CD4-positive, alpha-beta T cell (primary cell): ENCODE measurements at regions of chrX and their contacts with region 1.

Region 1: DNA sequence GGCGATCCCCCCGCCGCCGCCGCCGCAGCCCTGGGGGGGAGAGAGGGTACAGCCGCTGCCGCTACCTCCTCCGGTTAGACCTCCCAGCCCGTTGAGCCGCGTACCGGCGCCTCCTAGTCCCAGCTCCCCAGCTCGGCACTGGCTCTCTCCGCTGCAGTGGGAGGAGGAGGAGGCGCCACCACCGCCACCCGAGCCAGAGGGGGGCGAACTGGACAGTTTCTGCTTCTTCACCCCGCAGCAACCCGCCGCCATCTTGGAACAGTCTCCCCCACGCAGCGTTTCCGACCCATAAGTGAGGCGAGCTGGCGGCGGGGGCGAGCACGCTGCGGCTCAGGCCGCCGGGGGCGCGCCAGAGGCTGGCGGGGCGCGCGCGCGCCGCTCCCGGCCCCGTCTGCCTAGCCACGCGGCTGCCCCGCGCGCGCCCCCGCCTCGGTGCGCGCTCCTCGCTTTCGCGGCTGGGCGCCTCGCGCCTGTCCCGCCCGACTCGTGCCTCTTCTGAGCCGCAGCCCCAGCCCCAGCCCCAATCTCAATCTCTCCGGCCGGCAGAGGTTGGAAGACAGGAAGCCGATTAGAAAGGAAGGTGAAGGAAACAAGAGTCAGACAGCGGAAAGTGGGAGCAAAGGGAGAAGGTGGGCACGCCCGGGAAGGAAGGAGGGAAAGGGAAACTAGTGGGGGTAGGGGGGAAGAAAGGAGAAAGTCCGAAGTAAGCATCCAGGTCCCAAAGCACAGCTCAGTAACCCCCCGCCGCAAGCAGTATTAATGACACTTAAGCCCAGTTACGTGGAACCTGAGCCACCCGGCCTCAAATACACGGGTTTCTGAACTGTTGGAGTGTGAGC is at the start of gene AMMECR1:
- DNase-seq: peak; percentile 66 to 92 (median 77)
- ATAC-seq: peak; percentile 84
- H3K4me3 ChIP-seq: peak within 1 kb of the TSS; percentile 97
- H3K4me3 Mint-ChIP-seq: peak within 1 kb of the TSS; percentile 95
- H3K27ac ChIP-seq: peak within 1 kb of the TSS; percentile 69 to 71
- H3K27ac Mint-ChIP-seq: peak within 1 kb of the TSS; percentile 96
- H3K4me1 ChIP-seq: peaks cover 11% of the 10 kb centered on the region
- H3K4me1 Mint-ChIP-seq: peaks cover 44% of the 10 kb centered on the region
- H3K27me3 ChIP-seq: no peaks in the 10 kb centered on the region
- H3K27me3 Mint-ChIP-seq: no peaks in the 10 kb centered on the region
- CTCF ChIP-seq: no peak
- total RNA-seq, gene AMMECR1: 7.8 to 7.9 TPM

Region 2: GRCh38 chrX:109536439-109537336 is 781.4 kb before region 1 on chrX and contains the start of gene NXT2:
- CTCF ChIA-PET with region 1: no interaction called
- POLR2A ChIA-PET with region 1: no interaction called
- intact Hi-C with region 1: loop called in 1 of 2 experiments (anchors 10 kb)
- DNase-seq: peak; percentile 68 to 94 (median 81)
- ATAC-seq: peak; percentile 98
- H3K4me3 ChIP-seq: peak within 1 kb of the TSS; percentile 79
- H3K4me3 Mint-ChIP-seq: peak within 1 kb of the TSS; percentile 84
- H3K27ac ChIP-seq: peak within 1 kb of the TSS; percentile 81 to 92
- H3K27ac Mint-ChIP-seq: peak within 1 kb of the TSS; percentile 88
- H3K4me1 ChIP-seq: peaks cover 2% of the 10 kb centered on the region
- H3K4me1 Mint-ChIP-seq: peaks cover 13% of the 10 kb centered on the region
- H3K27me3 ChIP-seq: peaks cover 2 to 3% of the 10 kb centered on the region in 2 experiments
- H3K27me3 Mint-ChIP-seq: peaks cover 26% of the 10 kb centered on the region
- CTCF ChIP-seq: no peak
- total RNA-seq, gene NXT2: 4.0 to 4.1 TPM

Region 3: DNA sequence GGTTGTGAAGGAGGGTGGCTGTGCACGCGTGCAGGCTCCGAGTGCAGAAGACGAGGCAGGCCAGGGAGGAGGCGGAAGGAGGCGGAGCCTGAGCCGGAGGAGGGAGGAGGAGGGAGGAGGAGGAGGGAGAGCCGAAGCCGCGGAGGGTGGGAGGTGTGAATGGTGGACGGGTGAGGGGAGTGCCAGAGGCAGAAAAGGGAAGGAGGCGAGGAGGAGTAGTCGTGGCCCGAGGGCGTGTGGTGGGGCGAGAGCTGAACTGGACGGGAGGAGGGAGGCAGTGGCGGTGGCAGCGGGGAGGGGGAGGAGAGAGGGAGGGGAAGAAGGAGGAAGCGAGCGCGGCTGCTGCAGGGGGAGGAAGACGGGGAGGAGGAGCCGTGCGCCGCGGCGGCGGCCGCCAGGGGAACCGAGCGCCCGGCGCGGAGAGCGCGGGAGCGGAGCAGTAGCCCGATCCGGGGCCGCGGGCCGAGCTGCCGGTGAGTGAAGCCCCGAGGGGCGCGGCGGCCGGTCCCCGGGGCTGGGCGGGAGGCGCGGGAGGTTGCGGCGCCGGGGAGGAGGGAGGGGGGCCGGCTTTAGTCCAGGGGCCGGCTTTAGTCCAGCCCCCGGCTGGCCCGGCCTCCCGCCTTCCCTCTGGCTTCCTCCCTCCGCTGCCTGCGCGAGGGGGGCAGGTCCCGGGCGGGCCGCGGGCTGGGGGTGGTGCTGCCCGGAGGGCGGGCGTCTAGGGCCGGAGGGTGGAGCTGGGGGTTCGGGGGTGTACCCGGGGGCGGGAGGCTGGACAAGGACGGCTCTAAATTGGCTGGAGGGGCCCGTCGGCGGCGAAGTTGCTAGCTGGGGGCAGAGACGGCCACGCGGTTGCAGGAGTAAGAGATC is 315.5 kb before region 1 on chrX and contains the start of gene TMEM164:
- CTCF ChIA-PET with region 1: no interaction called
- POLR2A ChIA-PET with region 1: interaction called, 3 read pairs
- intact Hi-C with region 1: loop called in 1 of 2 experiments (anchors 5 kb)
- DNase-seq: peak; percentile 59 to 89 (median 76)
- ATAC-seq: peak; percentile 82
- H3K4me3 ChIP-seq: peak within 1 kb of the TSS; percentile 81
- H3K4me3 Mint-ChIP-seq: peak within 1 kb of the TSS; percentile 97
- H3K27ac ChIP-seq: peak within 1 kb of the TSS in 1 of 2 donors; percentile 29
- H3K27ac Mint-ChIP-seq: peak within 1 kb of the TSS; percentile 84
- H3K4me1 ChIP-seq: peaks cover 27% of the 10 kb centered on the region
- H3K4me1 Mint-ChIP-seq: peaks cover 44% of the 10 kb centered on the region
- H3K27me3 ChIP-seq: no peaks in the 10 kb centered on the region
- H3K27me3 Mint-ChIP-seq: no peaks in the 10 kb centered on the region
- CTCF ChIP-seq: no peak
- total RNA-seq, gene TMEM164: 11.1 to 13.4 TPM

Region 4: GRCh38 chrX:110188756-110189558 is 129.1 kb before region 1 on chrX:
- CTCF ChIA-PET with region 1: no interaction called
- POLR2A ChIA-PET with region 1: interaction called, 11 read pairs
- intact Hi-C with region 1: no loop called
- DNase-seq: peak in 1 of 14 experiments; percentile 39
- ATAC-seq: no peak
- H3K4me3 ChIP-seq: no peak overlapping the region
- H3K4me3 Mint-ChIP-seq: peak overlapping the region; percentile 34
- H3K27ac ChIP-seq: peak overlapping the region in 1 of 2 donors; percentile 44
- H3K27ac Mint-ChIP-seq: peak overlapping the region; percentile 76
- H3K4me1 ChIP-seq: peaks cover 9% of the 10 kb centered on the region
- H3K4me1 Mint-ChIP-seq: peaks cover 26% of the 10 kb centered on the region
- H3K27me3 ChIP-seq: no peaks in the 10 kb centered on the region
- H3K27me3 Mint-ChIP-seq: no peaks in the 10 kb centered on the region
- CTCF ChIP-seq: no peak

Region 5: DNA sequence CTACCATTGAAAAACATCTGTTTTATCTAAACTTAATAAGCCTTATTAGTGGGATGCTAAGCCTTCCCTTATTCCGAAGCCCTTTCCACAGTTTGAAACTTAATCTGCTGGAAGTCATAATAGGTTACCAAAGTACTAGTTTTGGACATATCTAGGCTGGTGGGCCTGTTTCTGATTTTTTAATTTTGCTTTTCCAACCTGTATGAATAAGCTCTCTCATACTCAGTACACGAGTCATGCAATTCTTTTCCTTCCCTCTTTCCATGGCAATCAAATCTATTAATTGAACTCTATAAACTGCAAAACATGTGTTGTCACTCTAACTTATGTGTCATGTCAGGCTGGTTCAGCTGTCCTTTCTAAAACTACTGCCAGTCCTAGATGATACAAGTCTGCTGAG is 91.1 kb before region 1 on chrX:
- CTCF ChIA-PET with region 1: no interaction called
- POLR2A ChIA-PET with region 1: interaction called, 32 read pairs
- intact Hi-C with region 1: loop called (anchors 5 to 10 kb)
- DNase-seq: no peak
- ATAC-seq: no peak
- H3K4me3 ChIP-seq: no peak overlapping the region
- H3K4me3 Mint-ChIP-seq: no peak overlapping the region
- H3K27ac ChIP-seq: no peak overlapping the region
- H3K27ac Mint-ChIP-seq: peak overlapping the region; percentile 93
- H3K4me1 ChIP-seq: peaks cover 14% of the 10 kb centered on the region
- H3K4me1 Mint-ChIP-seq: peaks cover 55% of the 10 kb centered on the region
- H3K27me3 ChIP-seq: no peaks in the 10 kb centered on the region
- H3K27me3 Mint-ChIP-seq: no peaks in the 10 kb centered on the region
- CTCF ChIP-seq: no peak

Region 6: GRCh38 chrX:110304884-110305283 is 13.2 kb before region 1 on chrX:
- CTCF ChIA-PET with region 1: interaction called, 3 read pairs
- POLR2A ChIA-PET with region 1: interaction called, 11 read pairs
- intact Hi-C with region 1: no loop called
- DNase-seq: no peak
- ATAC-seq: no peak
- H3K4me3 ChIP-seq: no peak overlapping the region
- H3K4me3 Mint-ChIP-seq: no peak overlapping the region
- H3K27ac ChIP-seq: no peak overlapping the region
- H3K27ac Mint-ChIP-seq: peak overlapping the region; percentile 3
- H3K4me1 ChIP-seq: no peaks in the 10 kb centered on the region
- H3K4me1 Mint-ChIP-seq: peaks cover 52% of the 10 kb centered on the region
- H3K27me3 ChIP-seq: no peaks in the 10 kb centered on the region
- H3K27me3 Mint-ChIP-seq: no peaks in the 10 kb centered on the region
- CTCF ChIP-seq: no peak

Region 7: DNA sequence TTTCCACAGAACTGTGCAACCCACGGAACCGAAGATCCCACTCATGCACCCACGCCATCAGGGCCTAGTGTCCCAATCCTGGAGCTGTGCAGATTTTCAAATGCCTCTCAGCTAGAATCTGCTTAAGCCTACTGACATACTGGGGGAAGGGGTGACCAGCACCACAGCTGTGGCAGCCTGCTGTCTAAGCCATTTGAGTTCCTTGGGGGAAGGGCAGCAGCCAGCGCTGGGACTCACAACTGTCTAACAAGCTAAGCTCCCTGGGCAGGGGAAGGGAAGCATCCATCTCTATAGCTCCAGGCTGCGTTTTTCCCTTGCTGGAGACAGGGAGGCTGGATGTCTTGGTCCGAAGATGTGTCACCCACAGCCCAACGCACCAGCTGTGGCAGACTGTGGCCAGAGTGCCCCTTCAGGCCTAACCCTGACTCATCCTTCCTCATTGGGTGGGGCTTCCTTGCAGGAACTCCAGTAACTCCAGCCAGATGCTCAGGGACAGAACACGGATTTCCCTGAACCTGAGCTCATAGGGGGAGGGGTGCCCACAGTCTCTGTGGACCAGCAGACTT is 282.8 kb after region 1 on chrX:
- CTCF ChIA-PET with region 1: no interaction called
- POLR2A ChIA-PET with region 1: no interaction called
- intact Hi-C with region 1: no loop called
- DNase-seq: no peak
- ATAC-seq: no peak
- H3K4me3 ChIP-seq: no peak overlapping the region
- H3K4me3 Mint-ChIP-seq: no peak overlapping the region
- H3K27ac ChIP-seq: no peak overlapping the region
- H3K27ac Mint-ChIP-seq: no peak overlapping the region
- H3K4me1 ChIP-seq: no peaks in the 10 kb centered on the region
- H3K4me1 Mint-ChIP-seq: no peaks in the 10 kb centered on the region
- H3K27me3 ChIP-seq: no peaks in the 10 kb centered on the region
- H3K27me3 Mint-ChIP-seq: no peaks in the 10 kb centered on the region
- CTCF ChIP-seq: no peak